ENCODE measurements at regions of chr7 and their contacts with region 1.

Region 1: GRCh38 chr7:46454816-46455215 is 533.7 kb upstream of the IGFBP3 start:
- DNase-seq: no peak
- H3K4me3 ChIP-seq: no peak overlapping the region
- H3K27ac ChIP-seq: no peak overlapping the region
- H3K4me1 ChIP-seq: peaks cover 29% of the 10 kb centered on the region
- H3K27me3 ChIP-seq: no peaks in the 10 kb centered on the region
- CTCF ChIP-seq: no peak

Region 2: GRCh38 chr7:46569133-46569465 is 114.3 kb after region 1 on chr7:
- CTCF ChIA-PET with region 1: no interaction called
- dilution Hi-C with region 1: no loop called
- in situ Hi-C with region 1: no loop called
- intact Hi-C with region 1: loop called (anchors 5 kb)
- DNase-seq: peak; percentile 47
- H3K4me3 ChIP-seq: no peak overlapping the region
- H3K27ac ChIP-seq: no peak overlapping the region
- H3K4me1 ChIP-seq: peaks cover 23% of the 10 kb centered on the region
- H3K27me3 ChIP-seq: no peaks in the 10 kb centered on the region
- CTCF ChIP-seq: no peak